BJ (cell line): ENCODE measurements at regions of chr3 and their contacts with region 1.

Region 1: GRCh38 chr3:141875374-141875892 is 1.0 kb upstream of the ATP1B3 start:
- DNase-seq: no peak
- H3K4me3 ChIP-seq: peak overlapping the region; percentile 62
- H3K27me3 ChIP-seq: no peaks in the 10 kb centered on the region
- CTCF ChIP-seq: peak; percentile 96

Region 2: GRCh38 chr3:141738022-141738890 is 137.2 kb before region 1 on chr3 and contains the start of gene RNF7:
- CTCF ChIA-PET with region 1: interaction called, 12 read pairs
- POLR2A ChIA-PET with region 1: no interaction called
- DNase-seq: peak; percentile 59
- H3K4me3 ChIP-seq: peak within 1 kb of the TSS; percentile 94
- H3K27me3 ChIP-seq: no peaks in the 10 kb centered on the region
- CTCF ChIP-seq: peak; percentile 60
- polyA plus RNA-seq, gene RNF7: 74.4 and 99.6 TPM in 2 replicates

Region 3: GRCh38 chr3:141863491-141863890 is 11.9 kb before region 1 on chr3:
- CTCF ChIA-PET with region 1: interaction called, 13 read pairs
- POLR2A ChIA-PET with region 1: no interaction called
- DNase-seq: no peak
- H3K4me3 ChIP-seq: no peak overlapping the region
- H3K27me3 ChIP-seq: 0 out of 2 replicates have a peak, but pooled peaks cover 1% of the 10 kb centered on the region
- CTCF ChIP-seq: no peak

Region 4: DNA sequence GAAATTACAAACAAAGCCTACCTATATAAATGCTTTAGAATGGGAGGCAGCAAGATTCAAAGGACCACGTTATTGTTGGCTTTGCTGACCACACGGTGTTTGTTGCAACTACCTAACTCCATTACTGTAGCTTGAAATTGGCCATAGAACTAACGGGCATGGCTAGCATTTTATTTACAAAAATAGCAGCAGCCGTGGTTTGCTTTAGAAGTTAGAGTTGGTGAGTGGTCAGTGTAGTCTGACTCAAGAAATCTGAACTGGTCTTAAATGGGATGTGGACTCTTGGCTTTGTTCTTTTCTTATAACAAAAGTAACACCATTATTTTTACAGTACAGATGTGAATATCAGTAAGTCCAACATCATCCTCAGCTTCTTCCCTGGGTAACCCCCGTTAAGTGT is 11.6 kb after region 1 on chr3:
- CTCF ChIA-PET with region 1: interaction called, 13 read pairs
- POLR2A ChIA-PET with region 1: interaction called, 10 read pairs
- DNase-seq: no peak
- H3K4me3 ChIP-seq: no peak overlapping the region
- H3K27me3 ChIP-seq: no peaks in the 10 kb centered on the region
- CTCF ChIP-seq: no peak